Activated T-helper 2 cell treated with anti-CD3 and anti-CD28 coated beads, Interferon-gamma antibody, Interleukin-2, Interleukin-4, amounts not matched to agents 10 μg/mL and 5 μg/mL and 100 μg/mL, durations not matched to agents 14 hours and 24 hours and 36 hours (primary cell): ENCODE measurements at regions of chr12 and their contacts with region 1.

Region 1: GRCh38 chr12:10540776-10541205 is 35.1 kb downstream of the EIF2S3B start:
- DNase-seq: no peak
- H3K4me3 Mint-ChIP-seq: no peak overlapping the region
- H3K27ac Mint-ChIP-seq: peak overlapping the region; percentile 57
- H3K4me1 Mint-ChIP-seq: peaks cover 8% of the 10 kb centered on the region
- H3K27me3 Mint-ChIP-seq: peaks cover 22% of the 10 kb centered on the region

Region 2: GRCh38 chr12:10243818-10244520 is 296.8 kb before region 1 on chr12:
- intact Hi-C with region 1: loop called (anchors 5 kb)
- DNase-seq: no peak
- H3K4me3 Mint-ChIP-seq: peak overlapping the region; percentile 65
- H3K27ac Mint-ChIP-seq: no peak overlapping the region
- H3K4me1 Mint-ChIP-seq: peaks cover 29% of the 10 kb centered on the region
- H3K27me3 Mint-ChIP-seq: peaks cover 23% of the 10 kb centered on the region

Region 3: DNA sequence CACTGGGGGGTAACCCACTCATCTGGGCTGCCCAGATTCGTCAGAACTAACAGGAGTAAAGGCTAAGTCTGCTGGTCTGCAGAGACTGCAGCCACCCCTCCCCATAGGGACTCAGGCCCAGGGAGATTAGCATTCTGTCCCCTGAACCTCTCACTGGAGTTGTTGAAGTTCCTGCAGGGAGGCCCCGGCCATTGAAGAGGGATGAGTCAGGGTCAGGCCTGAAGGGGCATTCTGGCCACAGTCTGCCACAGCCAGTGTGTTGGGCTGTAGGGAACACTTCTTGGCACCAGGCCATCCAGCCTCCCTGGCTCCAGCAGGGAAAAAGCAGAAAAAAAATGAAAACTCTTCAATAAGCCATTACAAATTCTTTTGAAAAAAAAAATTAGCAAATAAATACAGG is 186.3 kb before region 1 on chr12:
- intact Hi-C with region 1: no loop called
- DNase-seq: no peak
- H3K4me3 Mint-ChIP-seq: no peak overlapping the region
- H3K27ac Mint-ChIP-seq: no peak overlapping the region
- H3K4me1 Mint-ChIP-seq: no peaks in the 10 kb centered on the region
- H3K27me3 Mint-ChIP-seq: peaks cover 23% of the 10 kb centered on the region

Region 4: DNA sequence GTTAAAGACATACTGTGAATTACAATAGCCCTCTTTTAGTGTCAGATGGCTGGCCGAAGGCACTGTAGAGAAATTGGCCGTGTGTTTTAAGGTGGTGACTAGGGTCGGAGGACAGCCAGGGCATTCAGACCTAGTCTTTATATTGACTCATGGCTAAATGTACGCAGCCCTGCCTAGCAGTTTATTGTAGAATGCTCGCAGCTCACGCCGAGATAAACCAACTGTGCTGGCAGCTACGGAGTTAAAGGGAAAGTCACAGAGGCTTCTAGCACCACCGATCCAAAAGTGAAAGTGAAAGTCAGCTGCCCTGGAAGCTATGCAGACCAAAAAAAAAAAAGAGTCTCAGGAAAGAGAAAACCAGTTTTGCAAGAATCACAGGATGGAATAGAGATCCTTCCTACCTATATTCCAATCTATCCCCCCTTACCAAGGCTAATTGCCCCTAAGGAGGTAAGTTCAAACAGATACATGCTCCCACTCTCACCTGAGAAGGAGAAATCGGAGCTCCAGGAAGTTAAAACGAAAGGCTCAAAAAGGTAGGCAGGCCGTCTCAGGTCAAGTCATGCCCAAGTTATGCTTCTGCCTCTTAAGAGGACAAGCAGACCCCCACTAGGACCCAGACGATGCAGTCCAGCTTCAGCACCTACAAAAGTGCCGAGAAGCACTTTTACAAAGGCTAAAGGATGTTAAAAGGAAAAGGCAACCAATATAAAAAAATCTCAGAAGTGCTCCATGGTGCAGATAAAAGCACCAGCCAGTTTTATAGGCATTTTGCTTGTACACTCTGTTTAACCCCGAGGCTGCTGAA is 175.8 kb before region 1 on chr12:
- intact Hi-C with region 1: loop called (anchors 2 kb)
- DNase-seq: peak; percentile 51
- H3K4me3 Mint-ChIP-seq: no peak overlapping the region
- H3K27ac Mint-ChIP-seq: no peak overlapping the region
- H3K4me1 Mint-ChIP-seq: peaks cover 9% of the 10 kb centered on the region
- H3K27me3 Mint-ChIP-seq: peaks cover 27% of the 10 kb centered on the region

Region 5: GRCh38 chr12:10503460-10503859 is 37.3 kb before region 1 on chr12:
- intact Hi-C with region 1: loop called (anchors 1 kb)
- DNase-seq: no peak
- H3K4me3 Mint-ChIP-seq: no peak overlapping the region
- H3K27ac Mint-ChIP-seq: no peak overlapping the region
- H3K4me1 Mint-ChIP-seq: peaks cover 12% of the 10 kb centered on the region
- H3K27me3 Mint-ChIP-seq: peaks cover 5% of the 10 kb centered on the region

Region 6: DNA sequence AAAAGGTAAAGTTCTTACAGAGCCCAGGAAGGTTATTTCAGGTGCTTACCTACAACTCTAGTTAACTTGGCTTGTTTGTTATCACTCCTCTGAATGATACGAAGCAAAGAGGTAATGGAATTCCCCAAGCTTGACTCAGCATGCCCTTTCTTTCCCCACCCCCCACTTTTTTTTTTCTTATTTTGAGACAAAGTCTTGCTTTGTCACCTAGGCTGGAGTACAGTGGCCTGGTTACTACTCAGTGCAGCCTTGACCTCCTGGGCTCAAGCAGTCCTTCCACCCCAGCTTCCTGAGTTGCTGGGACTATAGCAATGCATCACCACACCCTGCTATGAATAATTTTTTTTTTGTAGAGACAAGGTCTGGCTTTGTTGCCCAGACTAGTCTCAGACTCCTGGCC is 199.4 kb after region 1 on chr12:
- intact Hi-C with region 1: no loop called
- DNase-seq: no peak
- H3K4me3 Mint-ChIP-seq: no peak overlapping the region
- H3K27ac Mint-ChIP-seq: no peak overlapping the region
- H3K4me1 Mint-ChIP-seq: no peaks in the 10 kb centered on the region
- H3K27me3 Mint-ChIP-seq: peaks cover 45% of the 10 kb centered on the region